MCF 10A (cell line): ENCODE measurements at regions of chr10 and their contacts with region 1.

Region 1: GRCh38 chr10:5623081-5623748 is 43.2 kb downstream of the ASB13 start:
- DNase-seq: peak; percentile 89
- H3K4me3 Mint-ChIP-seq: no peak overlapping the region
- H3K27ac Mint-ChIP-seq: no peak overlapping the region
- H3K4me1 Mint-ChIP-seq: peaks cover 10% of the 10 kb centered on the region
- H3K27me3 Mint-ChIP-seq: no peaks in the 10 kb centered on the region
- CTCF ChIP-seq: peak; percentile 88

Region 2: DNA sequence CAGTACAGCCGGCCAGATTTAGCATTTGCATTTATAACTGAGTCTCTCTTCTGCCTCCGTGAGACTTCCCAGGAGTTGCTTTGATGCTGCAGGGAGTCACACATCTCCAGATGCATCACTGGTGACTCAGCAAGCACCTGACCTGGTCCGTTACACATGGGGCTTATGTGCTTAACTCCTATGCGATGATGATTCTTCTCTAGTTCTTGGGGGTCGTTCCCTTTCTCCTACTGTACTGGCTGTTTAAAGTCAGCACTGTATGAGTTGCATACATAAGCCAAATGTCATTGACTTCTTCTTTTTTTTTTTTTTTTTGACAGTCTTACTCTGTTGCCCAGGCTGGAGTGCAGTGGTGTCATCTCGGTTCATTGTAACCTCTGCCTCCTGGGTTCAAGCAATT is 810.2 kb before region 1 on chr10:
- CTCF ChIA-PET with region 1: interaction called, 12 read pairs
- POLR2A ChIA-PET with region 1: interaction called, 3 read pairs
- intact Hi-C with region 1: loop called (anchors 5 kb)
- DNase-seq: peak; percentile 76
- H3K4me3 Mint-ChIP-seq: no peak overlapping the region
- H3K27ac Mint-ChIP-seq: no peak overlapping the region
- H3K4me1 Mint-ChIP-seq: peaks cover 18% of the 10 kb centered on the region
- H3K27me3 Mint-ChIP-seq: no peaks in the 10 kb centered on the region
- CTCF ChIP-seq: no peak

Region 3: DNA sequence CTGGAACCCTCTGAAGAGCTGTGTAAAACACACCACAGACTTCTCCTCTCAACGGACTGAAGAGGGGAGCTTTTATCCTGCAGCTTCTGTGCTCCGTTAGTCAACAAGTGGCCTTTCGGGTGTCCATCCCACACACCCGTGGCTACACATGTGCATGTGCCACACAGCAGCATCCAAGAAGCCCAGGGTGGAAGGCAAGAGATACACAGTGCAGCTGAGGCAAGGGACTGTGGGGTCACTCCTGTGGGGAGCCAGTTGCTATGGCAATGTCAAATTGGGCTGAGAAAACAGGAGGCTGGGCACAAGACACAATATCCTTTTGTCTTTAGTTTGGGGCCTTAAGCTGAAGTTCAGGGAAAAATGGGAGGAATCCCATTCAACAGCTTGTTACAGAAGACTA is 182.1 kb before region 1 on chr10:
- CTCF ChIA-PET with region 1: interaction called, 264 read pairs
- POLR2A ChIA-PET with region 1: interaction called, 121 read pairs
- intact Hi-C with region 1: loop called (anchors 1 kb)
- DNase-seq: no peak
- H3K4me3 Mint-ChIP-seq: no peak overlapping the region
- H3K27ac Mint-ChIP-seq: no peak overlapping the region
- H3K4me1 Mint-ChIP-seq: peaks cover 18% of the 10 kb centered on the region
- H3K27me3 Mint-ChIP-seq: no peaks in the 10 kb centered on the region
- CTCF ChIP-seq: no peak

Region 4: DNA sequence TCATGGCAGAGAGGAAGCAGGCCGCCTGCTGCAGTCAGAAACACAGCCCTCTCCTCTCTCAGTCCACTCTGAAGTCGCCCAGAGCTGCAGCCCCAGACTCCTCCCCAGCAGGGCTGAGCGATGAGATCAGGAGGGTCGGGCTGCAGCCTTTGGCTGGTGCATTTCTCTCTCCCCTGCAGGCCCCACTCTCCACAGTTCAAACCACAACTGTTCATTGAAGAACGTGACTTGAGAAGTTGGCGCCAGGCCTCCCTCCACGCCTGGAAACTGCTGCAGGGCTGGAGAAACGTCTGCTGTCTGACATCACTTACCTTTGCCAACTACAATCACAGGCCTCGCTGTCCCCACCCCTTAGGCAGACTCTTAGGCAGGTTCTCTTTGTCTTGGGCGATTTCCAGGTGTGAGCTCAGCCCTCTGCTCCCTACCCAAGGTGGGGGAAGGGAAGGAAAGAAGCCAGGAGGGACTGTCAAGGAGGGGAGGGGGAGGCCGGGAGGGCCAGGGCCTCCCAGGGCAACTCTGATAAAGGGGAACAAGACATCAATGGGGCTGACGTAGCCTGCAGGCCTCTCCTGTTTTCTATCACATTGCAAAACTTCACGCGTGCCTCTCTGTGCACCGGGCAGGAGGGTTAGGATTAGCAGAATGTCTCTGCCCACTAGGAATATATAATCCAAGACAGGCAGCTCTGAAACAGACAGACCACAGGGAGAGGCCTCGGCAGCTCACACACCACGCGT is 156.6 kb before region 1 on chr10:
- CTCF ChIA-PET with region 1: interaction called, 11 read pairs
- POLR2A ChIA-PET with region 1: interaction called, 8 read pairs
- intact Hi-C with region 1: no loop called
- DNase-seq: peak; percentile 91
- H3K4me3 Mint-ChIP-seq: peak overlapping the region; percentile 43
- H3K27ac Mint-ChIP-seq: peak overlapping the region; percentile 78
- H3K4me1 Mint-ChIP-seq: peaks cover 23% of the 10 kb centered on the region
- H3K27me3 Mint-ChIP-seq: no peaks in the 10 kb centered on the region
- CTCF ChIP-seq: no peak

Region 5: DNA sequence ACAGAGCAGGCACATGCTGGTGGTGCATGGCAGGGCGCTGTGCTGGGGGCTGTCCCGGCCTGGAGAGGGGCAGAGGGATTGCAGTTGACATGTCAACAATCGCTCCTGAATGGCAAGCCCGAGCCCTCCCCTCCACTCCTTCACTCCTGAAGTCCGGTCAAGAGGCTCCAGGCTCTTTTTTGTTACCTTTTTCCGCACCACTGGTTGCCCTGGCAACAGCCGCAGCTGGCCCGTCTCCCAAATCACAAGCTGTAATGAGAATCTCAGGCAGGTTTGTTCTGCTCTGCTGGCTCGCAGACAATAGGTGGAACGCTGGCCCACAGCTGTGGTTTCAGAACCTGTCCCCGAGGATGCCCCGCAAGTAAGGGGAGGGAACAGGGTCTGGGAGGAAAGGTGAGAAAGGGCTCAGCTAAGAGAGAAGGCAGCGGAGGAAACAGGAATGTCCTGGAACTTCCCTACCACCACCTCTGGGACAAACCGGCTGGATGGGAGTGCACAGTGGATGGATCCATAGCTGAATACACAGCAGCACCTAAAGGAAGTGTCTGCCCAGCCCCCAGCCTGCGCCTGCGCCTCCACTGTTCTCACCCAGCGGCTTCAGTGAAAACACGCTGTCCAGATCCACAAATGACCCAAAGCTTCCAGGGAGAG is 39.6 kb before region 1 on chr10:
- CTCF ChIA-PET with region 1: interaction called, 20 read pairs
- POLR2A ChIA-PET with region 1: interaction called, 20 read pairs
- intact Hi-C with region 1: loop called (anchors 2 kb)
- DNase-seq: peak; percentile 87
- H3K4me3 Mint-ChIP-seq: peak overlapping the region; percentile 51
- H3K27ac Mint-ChIP-seq: peak overlapping the region; percentile 92
- H3K4me1 Mint-ChIP-seq: peaks cover 30% of the 10 kb centered on the region
- H3K27me3 Mint-ChIP-seq: no peaks in the 10 kb centered on the region
- CTCF ChIP-seq: no peak

Region 6: DNA sequence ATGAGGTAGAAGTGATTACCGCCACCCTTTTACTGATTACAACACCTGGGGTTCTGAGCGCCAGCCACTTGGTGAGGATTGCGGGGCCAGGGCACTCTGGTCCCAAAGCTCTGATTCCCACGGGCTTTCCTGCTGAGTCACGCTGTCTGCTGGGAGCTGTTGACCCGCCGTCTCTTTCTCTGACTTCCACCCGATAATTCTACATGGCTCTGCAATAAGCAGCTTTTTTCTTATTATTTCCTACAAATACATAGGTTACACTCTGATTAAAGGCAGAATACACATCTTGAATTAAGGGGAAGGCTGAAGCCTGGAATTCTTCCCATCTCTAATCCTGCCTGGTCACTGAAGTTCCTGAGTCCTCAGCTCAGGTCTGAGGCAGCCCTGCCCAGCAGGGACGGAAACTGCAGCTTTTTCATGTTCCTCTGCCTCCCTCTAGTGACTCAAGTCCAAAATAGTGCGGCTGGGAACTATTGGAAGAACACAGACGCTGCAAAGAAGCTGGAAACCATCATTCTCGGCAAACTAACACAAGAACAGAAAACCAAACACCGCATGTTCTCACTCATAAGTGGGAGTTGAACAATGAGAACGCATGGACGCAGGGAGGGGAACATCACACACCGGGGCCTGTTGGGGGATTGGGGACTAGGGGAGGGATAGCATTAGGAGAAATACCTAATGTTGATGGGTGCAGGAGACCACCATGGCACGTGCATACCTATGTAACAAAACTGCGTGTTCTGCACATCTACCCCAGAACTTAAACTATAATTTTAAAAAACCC is 778.5 kb after region 1 on chr10:
- CTCF ChIA-PET with region 1: no interaction called
- POLR2A ChIA-PET with region 1: no interaction called
- intact Hi-C with region 1: loop called (anchors 10 kb)
- DNase-seq: peak; percentile 90
- H3K4me3 Mint-ChIP-seq: peak overlapping the region; percentile 73
- H3K27ac Mint-ChIP-seq: peak overlapping the region; percentile 63
- H3K4me1 Mint-ChIP-seq: peaks cover 25% of the 10 kb centered on the region
- H3K27me3 Mint-ChIP-seq: peaks cover 30% of the 10 kb centered on the region
- CTCF ChIP-seq: peak; percentile 72